ENCODE measurements at regions of chr11 and their contacts with region 1.

Region 1: DNA sequence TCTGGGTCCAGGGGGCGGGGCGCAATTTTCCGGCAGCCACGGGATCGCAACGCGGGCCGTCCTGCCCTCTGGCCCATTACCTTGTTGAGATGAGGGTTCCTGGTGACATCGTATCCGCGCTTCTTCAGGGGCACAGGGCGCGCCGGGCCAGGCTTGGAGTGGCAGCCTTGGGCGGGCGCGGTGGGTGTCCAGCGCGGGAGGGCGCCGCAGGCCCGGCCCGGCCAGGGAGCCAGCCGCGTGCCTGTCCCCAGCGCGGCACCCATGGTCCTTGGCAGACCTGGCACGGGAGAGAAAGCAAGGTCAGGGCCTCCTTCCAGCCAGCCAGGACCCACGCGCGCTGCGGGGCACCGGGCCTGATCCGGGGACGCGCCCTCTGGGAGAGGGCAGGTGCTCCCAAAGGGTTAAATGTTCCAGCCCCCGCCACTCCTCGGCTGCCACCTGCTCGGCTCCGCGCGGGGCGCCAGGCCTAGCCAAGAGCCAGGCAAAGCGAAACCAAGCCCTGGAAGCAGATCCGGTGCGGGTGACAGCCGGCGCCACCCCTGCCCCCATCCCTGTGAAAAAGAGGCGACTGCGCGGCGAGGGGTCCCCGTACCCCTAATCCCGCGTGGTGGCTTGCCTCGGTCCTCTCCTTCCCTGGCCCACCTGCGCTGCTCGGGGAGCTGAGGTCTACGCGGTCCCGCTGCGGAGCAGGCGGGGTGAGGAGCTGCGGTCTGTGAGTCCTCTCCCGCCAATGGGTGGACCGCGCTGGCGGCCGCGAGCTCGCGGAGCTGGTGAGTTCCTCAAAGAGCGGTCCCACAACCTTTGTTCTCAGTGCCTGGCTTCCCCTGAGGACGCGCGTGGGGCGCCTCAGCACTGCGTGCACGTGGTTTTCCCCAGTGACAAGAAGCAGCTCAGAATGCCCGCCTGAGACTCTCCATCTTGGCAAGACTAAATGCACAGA is at the start of gene ME3:
- DNase-seq: peak; percentile 89
- H3K4me3 ChIP-seq: peak within 1 kb of the TSS; percentile 51 to 75 (median 69)
- H3K27ac ChIP-seq: peak within 1 kb of the TSS; percentile 88 to 98 (median 92)
- H3K4me1 ChIP-seq: peaks cover 0 to 73% (median 50%) of the 10 kb centered on the region in 4 donors
- H3K27me3 ChIP-seq: no peaks in the 10 kb centered on the region
- CTCF ChIP-seq: no peak
- EP300 ChIP-seq: peak in 2 of 4 donors; percentile 31 to 65
- POLR2A ChIP-seq: peak in 1 of 2 donors; percentile 27
- total RNA-seq, gene ME3: 25.5 to 53.2 (median 37.0) TPM

Region 2: DNA sequence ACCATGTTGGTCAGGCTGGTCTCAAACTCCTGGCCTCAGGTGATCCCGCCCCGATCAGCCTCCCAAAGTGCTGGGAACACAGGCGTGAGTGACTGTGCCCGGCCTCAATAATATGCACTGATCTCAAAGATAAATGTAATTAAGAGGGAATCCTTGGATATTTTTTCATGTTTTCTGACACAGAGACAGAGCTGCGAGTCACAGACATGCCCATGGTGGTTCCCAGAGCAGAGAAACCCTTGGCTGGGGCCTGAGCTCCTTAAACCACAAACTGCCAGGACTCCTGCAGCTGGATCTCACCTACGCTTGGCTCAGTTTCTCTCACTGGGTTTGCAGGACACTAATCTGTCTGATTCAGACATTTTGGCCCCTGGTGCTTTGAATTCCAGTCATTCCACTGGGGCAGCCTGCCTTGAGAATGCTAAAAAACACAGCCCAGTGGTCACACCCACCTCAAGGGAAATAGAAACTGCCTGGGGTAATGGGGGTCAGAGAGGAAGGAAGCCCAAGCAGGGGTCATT is 174.7 kb before region 1 on chr11:
- intact Hi-C with region 1: no loop called
- DNase-seq: no peak
- H3K4me3 ChIP-seq: no peak overlapping the region
- H3K27ac ChIP-seq: no peak overlapping the region
- H3K4me1 ChIP-seq: no peaks in the 10 kb centered on the region
- H3K27me3 ChIP-seq: no peaks in the 10 kb centered on the region
- CTCF ChIP-seq: no peak
- EP300 ChIP-seq: no peak
- POLR2A ChIP-seq: no peak

Region 3: DNA sequence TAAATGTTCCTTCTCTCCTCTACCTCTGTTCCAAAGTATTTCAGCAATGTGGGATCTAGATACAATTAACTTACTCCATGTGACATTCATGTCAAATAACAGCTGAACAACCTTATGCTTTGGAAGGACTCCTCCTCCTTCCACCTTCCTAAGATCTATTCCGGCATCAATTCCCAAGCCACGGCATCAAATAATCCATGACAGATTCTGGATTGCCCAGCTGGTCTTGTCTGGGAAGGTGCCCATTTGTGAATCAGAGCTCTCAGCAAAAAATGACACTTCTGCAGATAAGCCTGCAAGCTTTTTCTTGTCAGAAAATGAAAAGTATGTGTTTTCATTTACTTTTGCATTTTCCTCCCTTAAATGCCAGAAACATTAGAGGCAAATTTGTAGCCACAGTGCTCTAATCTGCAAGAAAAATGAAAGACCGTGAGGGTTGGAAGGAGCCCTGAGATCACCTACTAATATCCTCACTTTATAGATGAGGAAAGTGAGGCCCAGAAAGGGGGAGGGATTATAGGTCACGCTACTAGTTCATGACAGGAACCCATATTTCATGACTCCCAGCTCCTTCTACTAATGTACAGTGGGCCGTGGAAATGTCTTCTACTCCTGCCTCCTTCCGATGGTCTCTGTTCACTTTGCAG is 123.6 kb before region 1 on chr11:
- intact Hi-C with region 1: no loop called
- DNase-seq: no peak
- H3K4me3 ChIP-seq: no peak overlapping the region
- H3K27ac ChIP-seq: peak overlapping the region; percentile 51 to 72 (median 56)
- H3K4me1 ChIP-seq: peaks cover 0 to 40% (median 23%) of the 10 kb centered on the region in 4 donors
- H3K27me3 ChIP-seq: no peaks in the 10 kb centered on the region
- CTCF ChIP-seq: no peak
- EP300 ChIP-seq: no peak
- POLR2A ChIP-seq: no peak

Region 4: GRCh38 chr11:86608251-86608799 is 63.6 kb before region 1 on chr11:
- intact Hi-C with region 1: loop called (anchors 5 kb)
- DNase-seq: peak; percentile 88
- H3K4me3 ChIP-seq: peak overlapping the region in 1 of 4 donors; percentile 15
- H3K27ac ChIP-seq: peak overlapping the region; percentile 35 to 75 (median 60)
- H3K4me1 ChIP-seq: peaks cover 0 to 58% (median 38%) of the 10 kb centered on the region in 4 donors
- H3K27me3 ChIP-seq: no peaks in the 10 kb centered on the region
- CTCF ChIP-seq: peak; percentile 88 to 94 (median 91)
- EP300 ChIP-seq: no peak
- POLR2A ChIP-seq: no peak

Region 5: GRCh38 chr11:86629045-86629706 is 42.8 kb before region 1 on chr11:
- intact Hi-C with region 1: loop called (anchors 2 kb)
- DNase-seq: no peak
- H3K4me3 ChIP-seq: no peak overlapping the region
- H3K27ac ChIP-seq: peak overlapping the region; percentile 19 to 81 (median 74)
- H3K4me1 ChIP-seq: peaks cover 0 to 76% (median 51%) of the 10 kb centered on the region in 4 donors
- H3K27me3 ChIP-seq: no peaks in the 10 kb centered on the region
- CTCF ChIP-seq: no peak
- EP300 ChIP-seq: peak in 2 of 4 donors; percentile 9 to 29
- POLR2A ChIP-seq: no peak

Region 6: GRCh38 chr11:86641537-86642261 is 30.3 kb before region 1 on chr11:
- intact Hi-C with region 1: no loop called
- DNase-seq: no peak
- H3K4me3 ChIP-seq: no peak overlapping the region
- H3K27ac ChIP-seq: no peak overlapping the region
- H3K4me1 ChIP-seq: peaks cover 0 to 4% (median 2%) of the 10 kb centered on the region in 4 donors
- H3K27me3 ChIP-seq: no peaks in the 10 kb centered on the region
- CTCF ChIP-seq: peak in 1 of 4 experiments; percentile 13
- EP300 ChIP-seq: no peak
- POLR2A ChIP-seq: no peak

Region 7: DNA sequence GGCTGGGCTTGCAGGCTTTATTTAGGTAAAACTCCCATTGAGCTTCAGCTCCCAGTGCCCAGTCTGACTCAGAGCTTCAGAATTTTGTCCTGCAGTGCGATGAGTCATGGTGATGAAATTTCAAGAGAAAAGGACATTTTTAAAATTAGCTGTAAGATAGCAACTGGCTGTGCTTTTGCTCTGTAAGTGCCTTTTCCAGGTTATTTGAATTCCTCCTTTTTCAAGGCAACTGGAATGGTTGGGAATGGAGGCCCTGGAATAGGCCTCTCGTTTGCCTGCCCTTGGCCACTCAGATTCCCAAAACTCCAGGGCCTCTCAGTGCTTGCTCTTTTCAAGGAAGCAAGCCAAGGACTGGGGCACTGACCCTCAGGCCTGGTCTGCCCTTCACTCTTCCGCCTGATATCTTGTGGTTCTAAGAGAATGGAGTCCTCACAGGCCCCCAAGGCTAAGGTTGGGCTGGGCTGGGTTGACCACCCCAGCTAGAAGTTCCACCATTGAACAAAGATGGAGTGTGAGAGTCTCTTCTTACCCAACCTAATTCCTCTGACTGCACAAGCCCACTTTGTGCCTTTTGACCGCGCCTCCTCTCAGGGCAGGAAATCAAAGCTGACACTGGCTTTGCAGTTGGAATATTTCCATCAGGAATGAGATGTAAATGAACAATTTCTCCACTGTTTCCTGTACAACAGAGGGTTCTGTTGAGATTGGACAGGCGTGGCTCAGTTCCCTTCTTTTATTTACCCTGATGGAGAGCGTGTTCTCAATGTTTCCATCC is 68.9 kb after region 1 on chr11:
- intact Hi-C with region 1: loop called (anchors 5 kb)
- DNase-seq: peak; percentile 88
- H3K4me3 ChIP-seq: no peak overlapping the region
- H3K27ac ChIP-seq: peak overlapping the region; percentile 83 to 96 (median 92)
- H3K4me1 ChIP-seq: peaks cover 0 to 76% (median 60%) of the 10 kb centered on the region in 4 donors
- H3K27me3 ChIP-seq: no peaks in the 10 kb centered on the region
- CTCF ChIP-seq: no peak
- EP300 ChIP-seq: no peak
- POLR2A ChIP-seq: no peak

Region 8: GRCh38 chr11:86802601-86803051 is 130.7 kb after region 1 on chr11:
- intact Hi-C with region 1: loop called (anchors 2 kb)
- DNase-seq: no peak
- H3K4me3 ChIP-seq: peak overlapping the region; percentile 69 to 91 (median 81)
- H3K27ac ChIP-seq: peak overlapping the region in 3 of 4 donors; percentile 88 to 94 (median 92)
- H3K4me1 ChIP-seq: peaks cover 0 to 71% (median 62%) of the 10 kb centered on the region in 4 donors
- H3K27me3 ChIP-seq: no peaks in the 10 kb centered on the region
- CTCF ChIP-seq: peak; percentile 17 to 76 (median 56)
- EP300 ChIP-seq: no peak
- POLR2A ChIP-seq: no peak

Region 9: DNA sequence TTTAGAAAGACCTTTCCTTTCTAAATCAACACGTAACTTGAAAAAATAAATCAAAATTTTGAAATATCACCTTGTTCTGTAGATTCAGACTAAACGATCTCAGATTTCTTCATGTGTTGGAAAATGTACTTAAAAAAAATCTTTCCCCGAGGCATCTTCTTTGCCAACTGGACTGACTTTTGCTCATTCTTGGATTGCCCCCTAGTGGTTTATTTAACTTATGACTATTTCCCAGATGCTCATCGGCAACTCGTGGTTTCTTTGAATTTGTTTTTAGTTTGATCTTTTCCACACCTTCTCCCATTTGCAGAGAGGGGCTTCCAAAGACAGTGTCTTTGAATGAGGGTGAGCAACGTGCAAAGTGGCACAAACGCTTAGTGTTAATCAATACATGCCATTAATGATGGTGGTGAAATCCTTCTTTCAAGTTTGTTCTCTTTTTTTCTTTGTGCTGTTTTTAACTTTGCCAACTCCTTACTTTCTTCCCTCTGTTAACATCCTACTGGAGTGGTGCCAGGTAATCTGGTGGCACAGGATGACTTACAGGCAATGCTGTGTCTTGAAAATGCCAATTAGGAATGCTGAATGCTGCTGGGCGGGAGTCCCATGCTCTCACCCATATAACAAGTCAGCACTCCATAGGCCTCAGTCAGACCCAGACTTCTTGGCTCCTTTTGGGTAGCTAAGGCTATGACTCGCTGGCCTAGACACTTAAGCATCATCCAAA is 146.7 kb after region 1 on chr11:
- intact Hi-C with region 1: loop called (anchors 5 kb)
- DNase-seq: no peak
- H3K4me3 ChIP-seq: no peak overlapping the region
- H3K27ac ChIP-seq: peak overlapping the region in 3 of 4 donors; percentile 80 to 92 (median 87)
- H3K4me1 ChIP-seq: peaks cover 0 to 58% (median 55%) of the 10 kb centered on the region in 4 donors
- H3K27me3 ChIP-seq: no peaks in the 10 kb centered on the region
- CTCF ChIP-seq: peak; percentile 64 to 82 (median 72)
- EP300 ChIP-seq: peak in 1 of 4 donors; percentile 8
- POLR2A ChIP-seq: no peak

Region 10: DNA sequence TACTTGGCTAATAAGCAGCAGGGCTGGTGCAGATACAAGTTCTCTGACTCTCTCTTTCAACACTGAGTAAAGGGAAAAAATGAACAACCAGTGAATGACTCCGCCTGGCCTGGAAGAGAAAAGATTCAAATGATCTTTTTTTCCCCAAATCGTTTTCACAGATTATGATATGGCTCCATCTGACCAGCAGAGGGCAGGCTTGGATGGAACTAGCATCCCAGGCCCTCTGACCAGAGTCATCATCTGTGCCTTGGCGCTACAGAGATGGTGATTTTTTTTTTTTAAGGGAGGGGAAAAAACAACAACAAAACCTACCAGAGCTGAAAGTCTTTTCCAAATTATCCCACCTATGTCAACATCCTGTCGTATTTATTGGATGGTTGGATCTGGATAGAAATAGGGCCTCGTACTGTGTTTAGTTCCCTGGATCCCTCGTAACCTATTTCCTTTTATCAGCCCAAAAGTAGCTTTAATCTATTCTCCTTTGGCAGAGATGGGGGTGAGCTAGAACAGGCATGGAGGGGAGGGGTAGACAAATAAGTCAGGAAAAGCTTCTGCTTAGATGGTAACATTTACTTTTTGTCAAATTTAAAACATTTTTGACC is 198.1 kb after region 1 on chr11:
- intact Hi-C with region 1: no loop called
- DNase-seq: peak; percentile 81
- H3K4me3 ChIP-seq: no peak overlapping the region
- H3K27ac ChIP-seq: no peak overlapping the region
- H3K4me1 ChIP-seq: no peaks in the 10 kb centered on the region
- H3K27me3 ChIP-seq: no peaks in the 10 kb centered on the region
- CTCF ChIP-seq: peak; percentile 59 to 69 (median 62)
- EP300 ChIP-seq: no peak
- POLR2A ChIP-seq: no peak

Measured in sigmoid colon (tissue), 7 donors.